Stomach (tissue), 19 donors: ENCODE measurements at regions of chr3 and their contacts with region 1.

Region 1: DNA sequence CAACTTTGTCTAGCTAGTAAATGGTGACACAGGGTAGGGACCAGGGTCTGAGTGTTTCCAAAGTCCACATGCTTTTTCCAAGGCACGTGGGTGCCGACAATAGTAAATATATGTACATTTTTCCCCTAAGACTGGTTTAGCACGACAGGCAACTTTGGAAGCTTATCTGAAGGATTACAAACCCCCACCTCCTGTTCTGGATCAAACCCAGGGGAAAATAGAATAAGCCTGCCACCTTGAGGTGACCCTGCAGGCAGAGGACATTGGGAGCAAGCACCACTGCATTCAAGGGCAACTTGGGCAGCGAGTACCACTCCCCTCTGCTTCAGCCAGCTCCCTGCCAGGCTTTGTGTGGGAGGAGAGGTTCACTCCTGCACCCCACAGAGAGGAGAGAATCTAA is 44.8 kb downstream of the KBTBD12 start:
- DNase-seq: peak; percentile 56 to 86
- H3K4me3 ChIP-seq: no peak overlapping the region
- H3K27ac ChIP-seq: peak overlapping the region in 1 of 5 donors; percentile 66
- H3K4me1 ChIP-seq: peaks cover 3 to 32% (median 11%) of the 10 kb centered on the region in 4 donors
- H3K27me3 ChIP-seq: no peaks in the 10 kb centered on the region
- CTCF ChIP-seq: peak in 3 of 7 experiments; percentile 37 to 59 (median 47)
- EP300 ChIP-seq: no peak
- POLR2A ChIP-seq: no peak

Region 2: GRCh38 chr3:127547761-127548605 is 411.9 kb before region 1 on chr3:
- intact Hi-C with region 1: no loop called
- DNase-seq: peak; percentile 86 to 91
- H3K4me3 ChIP-seq: peak overlapping the region; percentile 58 to 78 (median 67)
- H3K27ac ChIP-seq: peak overlapping the region; percentile 70 to 87 (median 77)
- H3K4me1 ChIP-seq: peaks cover 33 to 43% (median 37%) of the 10 kb centered on the region in 4 donors
- H3K27me3 ChIP-seq: no peaks in the 10 kb centered on the region
- CTCF ChIP-seq: peak in 5 of 7 experiments; percentile 58 to 88 (median 75)
- EP300 ChIP-seq: no peak
- POLR2A ChIP-seq: no peak

Region 3: DNA sequence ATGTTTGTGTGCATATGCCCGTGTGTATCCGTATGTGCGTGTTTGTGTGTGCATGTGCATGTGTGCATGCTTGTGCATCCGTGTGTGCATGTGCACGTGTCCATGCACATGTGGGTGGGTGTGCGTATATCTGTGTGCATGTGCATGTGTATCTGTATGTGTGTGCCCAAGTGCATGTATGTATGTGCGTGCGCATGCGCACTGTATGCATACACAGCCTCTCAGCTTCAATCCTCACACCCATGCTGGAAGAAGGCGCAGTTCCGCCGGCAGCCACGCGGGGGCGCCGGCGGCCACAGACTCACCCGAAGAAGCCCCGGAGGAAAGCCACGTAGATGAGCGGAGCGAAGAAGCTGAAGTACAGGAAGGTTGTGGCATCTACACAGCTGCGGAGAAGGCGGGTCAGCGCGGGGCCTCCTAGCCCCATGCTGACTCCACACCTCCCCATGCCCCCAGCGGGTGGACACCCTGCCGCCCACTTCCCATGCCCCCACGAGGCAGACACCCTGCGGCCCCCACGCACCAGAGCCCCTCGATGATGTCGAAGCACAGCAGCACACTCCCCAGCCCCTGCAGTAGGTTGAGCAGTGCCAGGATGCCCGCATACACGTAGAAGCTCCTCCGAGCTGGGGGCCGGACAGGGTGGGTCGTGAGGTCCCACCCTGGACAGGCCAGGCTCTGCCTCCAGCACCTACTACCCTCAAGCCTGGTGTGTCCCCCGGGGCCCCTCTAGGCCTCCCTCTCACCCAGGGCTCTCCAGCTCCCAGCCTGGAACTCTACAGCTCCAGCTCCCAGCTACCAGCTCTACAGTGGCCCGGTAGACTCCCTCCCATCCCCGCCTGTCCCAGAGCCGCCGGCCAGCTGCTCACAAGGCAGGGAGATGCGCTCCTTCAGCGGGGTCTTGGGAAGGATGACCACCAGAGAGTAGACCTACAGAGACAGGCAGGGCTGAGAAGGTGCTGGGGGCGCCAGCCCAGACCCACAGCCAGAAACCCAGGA is 384.7 kb before region 1 on chr3:
- intact Hi-C with region 1: loop called (anchors 10 kb)
- DNase-seq: peak; percentile 92 to 96
- H3K4me3 ChIP-seq: peak overlapping the region in 1 of 4 donors; percentile 13
- H3K27ac ChIP-seq: peak overlapping the region in 1 of 5 donors; percentile 24
- H3K4me1 ChIP-seq: peaks cover 6 to 25% (median 13%) of the 10 kb centered on the region in 4 donors
- H3K27me3 ChIP-seq: no peaks in the 10 kb centered on the region
- CTCF ChIP-seq: peak in 5 of 7 experiments; percentile 92 to 99 (median 98)
- EP300 ChIP-seq: no peak
- POLR2A ChIP-seq: no peak

Region 4: GRCh38 chr3:127652231-127652995 is 307.4 kb before region 1 on chr3:
- intact Hi-C with region 1: loop called (anchors 10 kb)
- DNase-seq: peak; percentile 54 to 80
- H3K4me3 ChIP-seq: no peak overlapping the region
- H3K27ac ChIP-seq: no peak overlapping the region
- H3K4me1 ChIP-seq: peaks cover 0 to 6% (median 2%) of the 10 kb centered on the region in 4 donors
- H3K27me3 ChIP-seq: no peaks in the 10 kb centered on the region
- CTCF ChIP-seq: peak in 5 of 7 experiments; percentile 26 to 82 (median 74)
- EP300 ChIP-seq: no peak
- POLR2A ChIP-seq: no peak

Region 5: GRCh38 chr3:127786353-127787070 is 173.3 kb before region 1 on chr3:
- intact Hi-C with region 1: no loop called
- DNase-seq: peak; percentile 53 to 93
- H3K4me3 ChIP-seq: no peak overlapping the region
- H3K27ac ChIP-seq: peak overlapping the region in 4 of 5 donors; percentile 67 to 85 (median 76)
- H3K4me1 ChIP-seq: peaks cover 18 to 78% (median 55%) of the 10 kb centered on the region in 4 donors
- H3K27me3 ChIP-seq: no peaks in the 10 kb centered on the region
- CTCF ChIP-seq: no peak
- EP300 ChIP-seq: no peak
- POLR2A ChIP-seq: no peak